Activated CD8-positive, alpha-beta T cell treated with anti-CD3 and anti-CD28 coated beads, Interleukin-2, amount 10 ng/mL, durations not matched to agents 7 days and 5 days (primary cell): ENCODE measurements at regions of chr9 and their contacts with region 1.

Region 1: DNA sequence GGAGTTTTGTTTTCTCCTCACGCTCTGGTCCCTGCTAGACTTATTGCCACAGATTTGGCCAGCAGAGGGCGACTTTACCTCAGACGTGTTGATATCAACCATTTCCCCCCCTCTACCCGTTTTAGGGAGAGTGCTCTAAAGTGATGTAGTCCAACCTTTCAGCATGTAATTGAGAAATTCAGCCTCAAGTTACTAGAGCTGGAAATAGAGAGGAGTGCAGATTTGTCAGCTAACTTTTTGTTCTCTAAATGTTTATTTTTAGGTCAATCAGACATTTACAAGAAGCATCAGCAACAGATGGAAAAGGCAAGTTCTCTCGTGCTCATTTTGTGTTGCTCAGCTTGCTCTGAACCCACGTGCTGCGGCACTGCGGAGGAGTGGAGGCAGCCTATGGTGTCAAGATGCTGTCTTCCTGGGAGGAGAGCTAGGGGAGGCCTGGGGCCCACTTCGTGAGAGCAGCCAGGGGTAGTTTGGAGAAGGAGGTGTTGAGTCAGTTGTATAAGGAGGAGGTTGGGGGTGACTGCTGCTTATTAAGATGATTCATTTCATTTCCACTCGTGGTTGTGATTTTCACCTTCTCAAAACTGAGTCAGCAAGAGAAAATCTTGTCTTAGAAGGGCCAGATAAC is 53.6 kb downstream of the GPR107 start:
- DNase-seq: peak; percentile 90
- ATAC-seq: peak; percentile 90
- H3K4me3 Mint-ChIP-seq: no peak overlapping the region
- H3K27ac Mint-ChIP-seq: peak overlapping the region; percentile 41
- H3K4me1 Mint-ChIP-seq: peaks cover 25% of the 10 kb centered on the region
- H3K27me3 Mint-ChIP-seq: no peaks in the 10 kb centered on the region

Region 2: GRCh38 chr9:129761901-129762364 is 345.4 kb before region 1 on chr9:
- CTCF ChIA-PET with region 1: no interaction called
- POLR2A ChIA-PET with region 1: no interaction called
- DNase-seq: no peak
- ATAC-seq: no peak
- H3K4me3 Mint-ChIP-seq: no peak overlapping the region
- H3K27ac Mint-ChIP-seq: no peak overlapping the region
- H3K4me1 Mint-ChIP-seq: peaks cover 11% of the 10 kb centered on the region
- H3K27me3 Mint-ChIP-seq: peaks cover 8% of the 10 kb centered on the region

Region 3: DNA sequence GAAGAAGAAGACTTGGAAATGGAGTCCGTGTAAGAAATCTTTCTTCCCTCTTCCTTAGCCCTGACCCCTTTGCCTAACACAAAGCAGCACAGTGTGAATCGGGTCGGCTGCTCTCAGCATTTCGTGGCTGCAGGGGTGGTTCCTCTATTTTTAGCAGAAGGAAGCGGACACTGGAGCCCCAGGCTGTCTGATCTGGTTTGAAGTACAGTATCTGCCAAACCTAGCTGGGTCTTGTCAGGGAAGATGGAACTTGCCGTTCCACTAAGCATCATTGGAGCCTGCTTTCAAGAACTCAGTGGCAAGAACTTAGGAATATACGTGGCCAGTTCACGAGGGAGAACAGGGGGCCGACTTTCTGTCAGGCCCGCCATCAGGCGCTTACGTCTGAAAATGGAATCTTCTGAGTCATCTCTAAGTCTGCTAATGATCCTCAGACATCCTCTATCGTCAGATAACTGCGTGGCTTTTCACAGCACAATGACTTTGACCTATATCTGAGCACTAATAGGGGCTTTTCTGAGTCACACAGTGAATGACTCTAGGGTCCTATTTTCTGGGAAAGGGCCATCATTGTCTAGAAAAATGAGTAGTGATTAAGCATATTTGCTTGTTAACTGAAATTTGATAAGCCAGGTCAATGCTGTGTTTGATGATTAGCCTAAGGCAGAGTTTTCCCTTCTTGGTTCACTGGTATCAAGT is 21.5 kb after region 1 on chr9:
- CTCF ChIA-PET with region 1: interaction called, 21 read pairs
- POLR2A ChIA-PET with region 1: interaction called, 11 read pairs
- DNase-seq: peak; percentile 71
- ATAC-seq: peak; percentile 65
- H3K4me3 Mint-ChIP-seq: peak overlapping the region; percentile 76
- H3K27ac Mint-ChIP-seq: peak overlapping the region; percentile 99
- H3K4me1 Mint-ChIP-seq: peaks cover 57% of the 10 kb centered on the region
- H3K27me3 Mint-ChIP-seq: no peaks in the 10 kb centered on the region

Region 4: DNA sequence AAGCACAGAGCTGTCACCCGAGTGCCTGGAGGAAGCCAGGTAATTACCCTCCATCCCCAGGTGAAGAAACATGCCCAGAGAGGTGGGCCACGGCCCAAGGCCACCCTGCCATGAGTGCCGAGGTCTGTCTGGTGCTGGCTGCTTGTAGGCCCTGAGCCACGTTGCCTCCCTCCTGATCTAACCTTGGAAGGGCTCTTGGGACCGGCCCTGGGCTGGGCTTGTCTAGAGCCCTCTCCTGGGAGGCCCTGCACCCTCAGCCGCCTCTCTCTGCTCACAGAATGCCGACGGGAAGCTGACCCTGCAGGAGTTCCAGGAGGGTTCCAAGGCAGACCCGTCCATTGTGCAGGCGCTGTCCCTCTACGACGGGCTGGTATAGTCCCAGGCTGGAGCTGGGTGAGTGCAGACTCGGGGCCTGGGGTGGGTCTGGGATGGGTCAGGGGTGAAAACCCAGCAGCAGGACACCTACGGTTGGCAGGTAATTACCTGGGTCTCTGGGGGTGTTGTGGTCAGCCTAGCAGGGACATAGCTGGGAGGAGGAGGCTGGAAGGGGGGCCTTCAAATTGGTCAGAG is 118.8 kb after region 1 on chr9:
- CTCF ChIA-PET with region 1: interaction called, 11 read pairs
- POLR2A ChIA-PET with region 1: no interaction called
- DNase-seq: no peak
- ATAC-seq: no peak
- H3K4me3 Mint-ChIP-seq: no peak overlapping the region
- H3K27ac Mint-ChIP-seq: no peak overlapping the region
- H3K4me1 Mint-ChIP-seq: no peaks in the 10 kb centered on the region
- H3K27me3 Mint-ChIP-seq: no peaks in the 10 kb centered on the region

Region 5: GRCh38 chr9:130235897-130236668 is 128.7 kb after region 1 on chr9:
- CTCF ChIA-PET with region 1: interaction called, 81 read pairs
- POLR2A ChIA-PET with region 1: no interaction called
- DNase-seq: peak; percentile 73
- ATAC-seq: peak; percentile 60
- H3K4me3 Mint-ChIP-seq: no peak overlapping the region
- H3K27ac Mint-ChIP-seq: no peak overlapping the region
- H3K4me1 Mint-ChIP-seq: peaks cover 29% of the 10 kb centered on the region
- H3K27me3 Mint-ChIP-seq: no peaks in the 10 kb centered on the region

Region 6: GRCh38 chr9:130243015-130243734 is 135.8 kb after region 1 on chr9:
- CTCF ChIA-PET with region 1: interaction called, 81 read pairs
- POLR2A ChIA-PET with region 1: no interaction called
- DNase-seq: peak; percentile 86
- ATAC-seq: peak; percentile 83
- H3K4me3 Mint-ChIP-seq: peak overlapping the region; percentile 5
- H3K27ac Mint-ChIP-seq: peak overlapping the region; percentile 22
- H3K4me1 Mint-ChIP-seq: peaks cover 37% of the 10 kb centered on the region
- H3K27me3 Mint-ChIP-seq: peaks cover 3% of the 10 kb centered on the region